ENCODE measurements at regions of chr10 and their contacts with region 1.

Region 1: DNA sequence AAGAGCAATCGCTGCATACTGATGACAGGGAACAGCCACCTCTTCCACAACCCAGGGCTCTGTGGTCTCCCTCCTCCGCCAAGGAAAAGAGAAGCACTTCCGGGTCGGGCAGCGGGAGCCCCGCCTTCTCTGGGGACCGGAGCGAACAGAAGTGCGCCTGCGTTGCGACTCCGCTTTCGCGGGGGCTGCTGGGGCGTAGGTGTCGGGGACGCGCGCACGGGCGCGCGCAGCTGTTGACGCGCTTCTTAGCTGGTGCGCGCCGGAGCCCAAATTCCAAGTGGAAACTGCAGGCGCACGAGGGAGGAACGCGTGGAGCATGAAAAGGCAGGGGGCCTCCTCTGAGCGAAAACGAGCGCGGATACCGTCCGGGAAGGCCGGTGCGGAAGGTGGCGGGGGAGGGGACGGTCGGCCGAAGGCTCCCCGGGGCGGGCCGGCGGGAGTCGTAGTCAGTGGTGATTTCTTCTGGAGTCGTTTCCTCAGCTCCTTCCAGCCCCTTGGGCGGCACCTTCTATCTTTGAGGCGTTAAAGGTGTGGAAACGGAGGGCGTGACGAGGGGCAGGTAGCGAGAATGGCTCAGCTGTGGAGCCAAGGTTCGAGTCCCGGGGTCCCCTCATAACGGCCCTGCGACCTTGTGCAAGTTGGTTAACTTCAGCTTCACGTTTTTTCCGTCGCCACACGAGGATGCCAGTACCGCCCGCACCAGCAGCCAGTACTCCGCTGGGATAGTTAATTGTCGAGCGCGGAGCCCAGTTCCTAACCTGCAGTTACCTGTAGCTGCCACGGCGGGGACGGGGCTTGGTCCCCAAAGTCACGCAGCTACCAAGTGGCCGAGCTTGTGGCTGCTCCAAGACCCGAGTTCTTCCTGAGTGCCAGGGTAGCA is at the starts of genes COX15 and CUTC:
- DNase-seq: peak; percentile 95
- H3K4me3 Mint-ChIP-seq: peak within 1 kb of the TSS; percentile 88
- H3K27ac Mint-ChIP-seq: peak within 1 kb of the TSS; percentile 93
- H3K4me1 Mint-ChIP-seq: peaks cover 29% of the 10 kb centered on the region
- H3K27me3 Mint-ChIP-seq: no peaks in the 10 kb centered on the region
- CTCF ChIP-seq: peak; percentile 42
- total RNA-seq, gene COX15: 50.7 and 55.3 TPM in 2 replicates
- total RNA-seq, gene CUTC: 11.9 and 15.0 TPM in 2 replicates

Region 2: DNA sequence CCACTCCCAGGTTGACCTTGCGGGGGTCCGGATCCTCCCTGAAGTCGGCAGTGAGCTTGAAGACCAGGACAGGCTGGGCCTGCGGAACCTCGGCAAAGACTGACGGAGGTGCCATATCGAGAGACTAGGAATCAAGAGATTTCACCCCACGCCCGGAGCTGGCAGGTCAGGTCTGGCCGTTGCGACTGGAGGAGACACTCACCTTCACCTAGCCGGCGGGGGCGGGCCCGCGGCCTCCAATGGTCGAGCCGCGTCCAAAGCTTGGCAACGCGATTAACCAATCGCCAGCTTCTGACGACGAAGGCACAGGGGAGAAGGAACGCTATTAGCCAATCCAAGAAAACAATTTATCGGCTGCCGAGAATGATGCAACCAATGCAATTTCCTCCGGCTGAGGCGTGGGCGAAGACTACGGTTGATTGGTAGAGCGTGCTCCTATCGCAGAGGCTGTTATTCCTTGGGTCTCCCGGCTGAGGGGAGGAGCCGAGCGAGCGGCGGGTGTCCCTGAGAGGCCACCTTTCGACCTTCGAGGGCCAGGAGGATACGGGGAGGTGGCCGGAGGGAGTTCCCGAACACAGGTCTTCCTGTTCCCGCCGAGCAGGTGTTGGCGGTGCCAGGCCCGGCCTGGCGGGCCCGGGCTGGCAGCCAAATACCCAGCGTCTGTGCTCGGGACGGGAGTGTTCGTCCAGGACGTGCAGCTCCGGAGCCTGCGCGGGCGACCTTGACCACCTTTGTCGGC is 301.7 kb before region 1 on chr10 and contains the start of gene GOT1:
- CTCF ChIA-PET with region 1: no interaction called
- POLR2A ChIA-PET with region 1: interaction called, 21 read pairs
- intact Hi-C with region 1: no loop called
- DNase-seq: peak; percentile 100
- H3K4me3 Mint-ChIP-seq: peak within 1 kb of the TSS; percentile 97
- H3K27ac Mint-ChIP-seq: peak within 1 kb of the TSS; percentile 93
- H3K4me1 Mint-ChIP-seq: peaks cover 17% of the 10 kb centered on the region
- H3K27me3 Mint-ChIP-seq: no peaks in the 10 kb centered on the region
- CTCF ChIP-seq: no peak
- total RNA-seq, gene GOT1: 163 and 184 TPM in 2 replicates

Region 3: GRCh38 chr10:99659031-99659867 is 73.0 kb before region 1 on chr10 and contains the start of gene ENTPD7:
- CTCF ChIA-PET with region 1: no interaction called
- POLR2A ChIA-PET with region 1: interaction called, 49 read pairs
- intact Hi-C with region 1: loop called (anchors 5 kb)
- DNase-seq: peak; percentile 97
- H3K4me3 Mint-ChIP-seq: peak within 1 kb of the TSS; percentile 83
- H3K27ac Mint-ChIP-seq: peak within 1 kb of the TSS; percentile 80
- H3K4me1 Mint-ChIP-seq: peaks cover 59% of the 10 kb centered on the region
- H3K27me3 Mint-ChIP-seq: no peaks in the 10 kb centered on the region
- CTCF ChIP-seq: peak; percentile 27
- total RNA-seq, gene ENTPD7: 18.3 and 29.0 TPM in 2 replicates

Region 4: GRCh38 chr10:99711129-99711719 is 21.0 kb before region 1 on chr10:
- CTCF ChIA-PET with region 1: interaction called, 5 read pairs
- POLR2A ChIA-PET with region 1: interaction called, 10 read pairs
- intact Hi-C with region 1: no loop called
- DNase-seq: peak; percentile 65
- H3K4me3 Mint-ChIP-seq: no peak overlapping the region
- H3K27ac Mint-ChIP-seq: peak overlapping the region; percentile 2
- H3K4me1 Mint-ChIP-seq: peaks cover 8% of the 10 kb centered on the region
- H3K27me3 Mint-ChIP-seq: no peaks in the 10 kb centered on the region
- CTCF ChIP-seq: peak; percentile 53

Region 5: DNA sequence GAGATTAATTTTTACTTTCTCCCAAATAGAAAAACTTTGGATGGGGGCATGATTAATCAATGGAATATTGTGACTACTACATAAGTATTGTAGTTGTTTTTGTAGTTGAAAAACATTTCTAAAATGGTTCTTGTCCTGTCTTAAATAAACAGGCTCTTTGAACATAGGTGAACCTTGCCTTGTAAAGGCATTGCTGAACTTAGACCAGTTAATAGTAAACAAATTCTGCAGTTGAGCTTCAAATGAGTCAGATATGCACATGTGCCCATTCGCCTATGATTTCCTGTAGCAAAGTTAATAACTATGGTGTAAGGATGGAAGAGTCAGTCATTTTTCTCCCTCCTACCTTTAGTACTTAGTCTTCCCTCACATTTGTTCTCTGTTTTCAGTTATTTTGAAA is 22.4 kb after region 1 on chr10:
- CTCF ChIA-PET with region 1: no interaction called
- POLR2A ChIA-PET with region 1: interaction called, 36 read pairs
- intact Hi-C with region 1: no loop called
- DNase-seq: no peak
- H3K4me3 Mint-ChIP-seq: no peak overlapping the region
- H3K27ac Mint-ChIP-seq: no peak overlapping the region
- H3K4me1 Mint-ChIP-seq: no peaks in the 10 kb centered on the region
- H3K27me3 Mint-ChIP-seq: no peaks in the 10 kb centered on the region
- CTCF ChIP-seq: no peak

Region 6: GRCh38 chr10:99788598-99789256 is 56.5 kb after region 1 on chr10:
- CTCF ChIA-PET with region 1: interaction called, 11 read pairs
- POLR2A ChIA-PET with region 1: interaction called, 33 read pairs
- intact Hi-C with region 1: no loop called
- DNase-seq: peak; percentile 98
- H3K4me3 Mint-ChIP-seq: no peak overlapping the region
- H3K27ac Mint-ChIP-seq: no peak overlapping the region
- H3K4me1 Mint-ChIP-seq: peaks cover 30% of the 10 kb centered on the region
- H3K27me3 Mint-ChIP-seq: no peaks in the 10 kb centered on the region
- CTCF ChIP-seq: no peak

Measured in MCF 10A (cell line).